ENCODE measurements at regions of chr9 and their contacts with region 1.

Region 1: DNA sequence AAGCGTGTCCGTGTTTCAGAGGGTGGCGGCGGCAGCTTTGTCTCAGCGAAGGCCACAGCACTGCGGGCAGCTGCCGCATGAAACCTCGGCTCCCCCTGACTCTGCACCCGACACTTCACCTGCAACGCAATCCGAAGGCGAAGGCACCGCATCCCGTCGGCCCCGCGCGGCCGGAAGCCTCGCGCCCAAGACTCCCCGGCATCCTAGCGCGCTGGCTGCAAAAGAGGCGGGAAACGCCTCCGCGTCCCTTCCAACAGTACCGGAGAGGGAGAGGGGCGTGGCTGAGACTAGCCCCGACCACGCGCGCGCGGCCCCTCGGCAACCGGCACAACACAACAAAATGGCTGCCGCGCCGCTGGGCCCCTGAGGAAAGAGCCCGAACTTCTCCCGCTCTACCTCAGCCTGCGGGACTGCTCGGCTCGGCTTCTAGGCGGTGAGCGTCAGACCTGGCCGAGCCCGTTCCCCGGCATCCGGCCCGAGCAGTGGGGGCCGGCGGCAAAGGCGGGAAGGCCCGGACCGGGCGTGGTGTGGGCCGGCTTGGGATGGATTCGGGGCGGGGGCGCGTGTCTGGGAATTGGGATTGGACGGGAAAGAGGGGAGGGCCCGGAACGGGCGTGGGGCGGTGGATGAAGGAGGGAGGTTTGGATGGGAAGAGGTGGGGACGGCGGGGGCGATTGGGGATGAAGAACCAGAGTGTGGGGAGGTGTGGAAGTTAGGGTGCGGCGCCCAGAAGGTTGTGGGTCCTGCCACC is at the start of gene CNTRL:
- DNase-seq: peak; percentile 81 to 96
- H3K4me3 ChIP-seq: peak within 1 kb of the TSS; percentile 77
- H3K27ac ChIP-seq: peak within 1 kb of the TSS; percentile 94 to 98
- H3K4me1 ChIP-seq: peaks cover 0 to 18% of the 10 kb centered on the region in 2 donors
- H3K27me3 ChIP-seq: no peaks in the 10 kb centered on the region
- CTCF ChIP-seq: no peak
- total RNA-seq, gene CNTRL: 8.5 TPM

Region 2: DNA sequence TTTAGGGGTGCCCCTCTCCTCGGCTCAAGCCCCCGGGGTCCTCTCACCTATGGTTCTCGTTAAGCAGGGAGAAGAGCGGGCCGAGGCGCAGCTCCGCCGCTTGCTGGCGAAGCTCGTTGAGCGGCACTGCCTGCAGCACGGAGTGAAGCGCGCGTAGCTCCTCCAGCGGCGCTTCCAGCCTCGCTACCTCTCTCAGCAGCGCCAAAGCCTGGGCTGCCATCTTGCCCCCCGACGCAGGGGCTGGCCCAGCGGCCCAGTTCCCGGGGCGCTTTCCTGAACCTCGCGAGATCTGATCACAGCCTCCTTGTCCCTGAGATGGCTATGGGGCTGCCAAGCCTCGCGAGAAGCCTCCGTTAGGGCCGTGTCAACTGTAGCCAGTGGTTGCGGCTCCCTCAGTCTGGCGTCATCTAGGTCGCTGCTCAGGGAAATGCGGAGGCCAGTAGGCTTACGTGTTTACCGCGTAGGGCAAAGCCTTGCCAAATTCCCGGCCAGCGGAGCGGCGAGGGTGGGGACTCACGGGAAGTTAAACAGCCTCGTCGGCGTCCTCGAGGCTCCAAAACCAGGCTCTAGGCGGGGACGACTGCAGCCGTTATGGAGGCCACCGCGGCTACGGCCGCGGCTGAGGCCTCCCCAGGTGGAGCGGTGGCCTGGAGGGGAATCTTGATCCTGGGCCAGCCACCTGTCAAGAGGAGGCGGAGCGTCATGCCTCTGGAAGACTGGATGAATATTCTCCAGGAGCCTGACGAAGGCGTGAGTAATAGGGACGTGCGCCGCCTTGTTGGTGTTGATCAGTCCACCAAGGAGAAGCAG is 231.9 kb before region 1 on chr9 and contains the start of gene PSMD5:
- intact Hi-C with region 1: loop called (anchors 2 kb)
- DNase-seq: peak; percentile 99 to 100
- H3K4me3 ChIP-seq: peak within 1 kb of the TSS; percentile 75 to 84
- H3K27ac ChIP-seq: peak within 1 kb of the TSS; percentile 89 to 97
- H3K4me1 ChIP-seq: peaks cover 2 to 25% of the 10 kb centered on the region in 2 donors
- H3K27me3 ChIP-seq: no peaks in the 10 kb centered on the region
- CTCF ChIP-seq: no peak
- total RNA-seq, gene PSMD5: 18.2 TPM

Region 3: DNA sequence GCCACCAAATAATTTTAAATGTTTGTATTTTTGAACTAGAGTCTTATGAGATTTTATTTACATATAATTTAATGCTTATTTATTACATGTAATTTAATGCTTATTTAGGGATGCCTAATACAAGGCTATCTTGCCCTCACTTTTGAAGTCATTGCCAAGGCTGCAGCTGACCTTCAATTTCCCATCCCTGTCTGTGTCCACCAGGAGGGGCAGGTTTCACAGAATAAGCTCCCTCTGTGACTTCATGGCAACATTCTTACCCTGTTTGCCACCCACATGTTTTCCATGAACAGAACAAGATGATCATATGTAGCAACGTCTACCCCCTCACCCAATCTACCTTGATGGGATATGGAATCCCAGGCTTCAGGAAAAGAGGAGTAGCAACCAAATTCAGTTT is 51.7 kb before region 1 on chr9:
- intact Hi-C with region 1: no loop called
- DNase-seq: no peak
- H3K4me3 ChIP-seq: no peak overlapping the region
- H3K27ac ChIP-seq: no peak overlapping the region
- H3K4me1 ChIP-seq: no peaks in the 10 kb centered on the region
- H3K27me3 ChIP-seq: no peaks in the 10 kb centered on the region
- CTCF ChIP-seq: no peak

Region 4: DNA sequence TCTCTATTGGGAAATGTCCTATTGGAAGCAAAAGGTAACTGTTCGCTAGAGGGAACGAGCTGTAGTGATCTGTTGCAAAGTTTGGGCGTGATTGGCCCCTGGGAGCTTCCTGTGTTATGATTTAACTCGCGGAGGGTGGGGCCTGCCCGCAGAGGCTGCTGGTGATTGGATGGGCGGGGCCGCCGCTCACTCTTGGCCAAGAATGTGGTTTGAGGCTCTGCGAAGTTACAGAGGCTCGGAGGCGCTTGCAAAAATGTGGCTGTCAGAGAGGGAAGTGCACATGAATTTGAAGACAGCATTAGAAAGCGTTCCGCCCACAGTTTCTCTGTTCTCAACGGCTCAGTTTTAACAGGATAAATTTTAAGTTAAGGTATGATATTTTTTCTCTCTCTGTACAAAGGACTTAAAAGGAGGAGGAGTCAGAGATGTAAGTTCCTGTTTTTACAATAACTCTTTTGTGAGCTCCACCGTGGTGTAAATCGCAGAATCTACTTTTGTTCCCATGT is 46.8 kb after region 1 on chr9:
- intact Hi-C with region 1: loop called (anchors 2 kb)
- DNase-seq: peak; percentile 95 to 99
- H3K4me3 ChIP-seq: peak overlapping the region; percentile 42 to 63
- H3K27ac ChIP-seq: peak overlapping the region in 1 of 2 donors; percentile 43
- H3K4me1 ChIP-seq: peaks cover 0 to 3% of the 10 kb centered on the region in 2 donors
- H3K27me3 ChIP-seq: no peaks in the 10 kb centered on the region
- CTCF ChIP-seq: peak; percentile 21 to 48 (median 28)

Region 5: GRCh38 chr9:121278535-121279261 is 203.9 kb after region 1 on chr9:
- intact Hi-C with region 1: loop called (anchors 10 kb)
- DNase-seq: peak in 1 of 2 donors; percentile 92
- H3K4me3 ChIP-seq: peak overlapping the region in 1 of 2 donors; percentile 21
- H3K27ac ChIP-seq: peak overlapping the region; percentile 98 to 99
- H3K4me1 ChIP-seq: peaks cover 74 to 96% of the 10 kb centered on the region in 2 donors
- H3K27me3 ChIP-seq: no peaks in the 10 kb centered on the region
- CTCF ChIP-seq: peak; percentile 74 to 89 (median 84)

Measured in ascending aorta (tissue), 2 donors.